ENCODE measurements at regions of chr2 and their contacts with region 1.

Region 1: GRCh38 chr2:61538200-61538919 is at the start of gene XPO1:
- DNase-seq: peak; percentile 95 to 100 (median 99)
- ATAC-seq: peak; percentile 89
- H3K4me3 ChIP-seq: peak within 1 kb of the TSS; percentile 96
- H3K4me3 Mint-ChIP-seq: peak within 1 kb of the TSS; percentile 89 to 100 (median 98)
- H3K27ac ChIP-seq: peak within 1 kb of the TSS; percentile 98
- H3K27ac Mint-ChIP-seq: peak within 1 kb of the TSS; percentile 94 to 100 (median 99)
- H3K4me1 ChIP-seq: peaks cover 19 to 24% of the 10 kb centered on the region in 2 donors
- H3K4me1 Mint-ChIP-seq: peaks cover 24 to 43% (median 35%) of the 10 kb centered on the region in 7 donors
- H3K27me3 ChIP-seq: no peaks in the 10 kb centered on the region
- H3K27me3 Mint-ChIP-seq: peaks cover 0 to 8% (median 0%) of the 10 kb centered on the region in 5 donors
- total RNA-seq, gene XPO1: 132 to 192 (median 181) TPM

Region 2: GRCh38 chr2:59888015-59888414 is 1650.3 kb before region 1 on chr2:
- CTCF ChIA-PET with region 1: no interaction called
- POLR2A ChIA-PET with region 1: no interaction called
- intact Hi-C with region 1: loop called in 1 of 2 experiments (anchors 5 kb)
- DNase-seq: peak in 8 of 9 donors; percentile 22 to 90 (median 86)
- ATAC-seq: peak; percentile 97
- H3K4me3 ChIP-seq: no peak overlapping the region
- H3K4me3 Mint-ChIP-seq: peak overlapping the region; percentile 3 to 85 (median 72)
- H3K27ac ChIP-seq: peak overlapping the region; percentile 54
- H3K27ac Mint-ChIP-seq: peak overlapping the region; percentile 29 to 92 (median 85)
- H3K4me1 ChIP-seq: peaks cover 0 to 38% of the 10 kb centered on the region in 2 donors
- H3K4me1 Mint-ChIP-seq: peaks cover 28 to 74% (median 57%) of the 10 kb centered on the region in 7 donors
- H3K27me3 ChIP-seq: no peaks in the 10 kb centered on the region
- H3K27me3 Mint-ChIP-seq: peaks cover 0 to 16% (median 0%) of the 10 kb centered on the region in 5 donors

Region 3: DNA sequence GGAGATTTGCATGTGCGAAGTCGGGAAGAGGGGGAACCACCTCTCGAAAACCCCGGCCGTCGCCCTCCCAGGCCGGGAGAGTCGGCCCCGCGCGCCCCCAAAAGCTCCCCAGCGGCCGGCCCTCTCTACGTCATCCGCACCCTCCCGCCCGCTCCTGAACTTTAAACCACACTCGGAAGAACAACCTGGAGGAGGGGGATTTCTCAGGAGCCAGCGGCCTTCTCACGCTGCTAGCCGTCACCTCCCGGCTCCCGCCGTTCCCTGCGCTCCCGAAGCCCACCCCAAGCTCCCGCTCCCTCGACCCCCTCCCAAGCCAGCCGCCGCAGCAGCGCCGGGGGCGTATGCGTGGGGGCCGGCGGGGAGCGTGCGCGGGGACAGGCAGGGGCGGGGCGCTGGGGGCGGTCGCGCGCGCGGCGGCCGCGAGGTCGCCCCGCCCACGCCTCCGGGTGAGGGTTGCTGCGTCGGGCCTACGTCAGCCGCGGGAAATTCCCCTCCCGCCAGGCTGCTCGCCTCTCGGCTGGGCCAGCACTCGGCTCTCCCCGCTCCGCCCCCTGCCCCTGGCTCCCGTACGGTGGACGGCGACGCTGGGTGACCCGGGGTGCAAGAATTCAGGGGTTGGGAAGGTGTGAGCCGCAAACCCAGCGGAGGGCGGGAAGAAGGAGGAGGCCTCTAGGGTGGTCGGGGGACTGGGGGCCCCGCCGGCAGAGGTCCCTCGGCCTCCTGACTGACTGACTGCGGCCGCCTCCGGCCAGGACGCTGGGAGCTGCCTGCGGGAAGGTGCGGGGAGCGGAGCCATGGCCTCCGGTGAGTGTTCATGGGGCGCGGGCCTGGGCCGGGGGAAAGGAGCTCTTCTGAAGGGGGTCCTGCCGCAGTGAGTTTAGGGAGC is 657.1 kb before region 1 on chr2 and contains the start of gene REL:
- CTCF ChIA-PET with region 1: no interaction called
- POLR2A ChIA-PET with region 1: no interaction called
- intact Hi-C with region 1: loop called (anchors 1 to 2 kb)
- DNase-seq: peak; percentile 77 to 95 (median 88)
- ATAC-seq: peak; percentile 92
- H3K4me3 ChIP-seq: peak within 1 kb of the TSS; percentile 83
- H3K4me3 Mint-ChIP-seq: peak within 1 kb of the TSS; percentile 91 to 98 (median 96)
- H3K27ac ChIP-seq: peak within 1 kb of the TSS; percentile 100
- H3K27ac Mint-ChIP-seq: peak within 1 kb of the TSS; percentile 93 to 100 (median 98)
- H3K4me1 ChIP-seq: peaks cover 11 to 24% of the 10 kb centered on the region in 2 donors
- H3K4me1 Mint-ChIP-seq: peaks cover 22 to 39% (median 33%) of the 10 kb centered on the region in 7 donors
- H3K27me3 ChIP-seq: no peaks in the 10 kb centered on the region
- H3K27me3 Mint-ChIP-seq: no peaks in the 10 kb centered on the region
- total RNA-seq, gene REL: 18.9 to 78.8 (median 26.4) TPM

Region 4: DNA sequence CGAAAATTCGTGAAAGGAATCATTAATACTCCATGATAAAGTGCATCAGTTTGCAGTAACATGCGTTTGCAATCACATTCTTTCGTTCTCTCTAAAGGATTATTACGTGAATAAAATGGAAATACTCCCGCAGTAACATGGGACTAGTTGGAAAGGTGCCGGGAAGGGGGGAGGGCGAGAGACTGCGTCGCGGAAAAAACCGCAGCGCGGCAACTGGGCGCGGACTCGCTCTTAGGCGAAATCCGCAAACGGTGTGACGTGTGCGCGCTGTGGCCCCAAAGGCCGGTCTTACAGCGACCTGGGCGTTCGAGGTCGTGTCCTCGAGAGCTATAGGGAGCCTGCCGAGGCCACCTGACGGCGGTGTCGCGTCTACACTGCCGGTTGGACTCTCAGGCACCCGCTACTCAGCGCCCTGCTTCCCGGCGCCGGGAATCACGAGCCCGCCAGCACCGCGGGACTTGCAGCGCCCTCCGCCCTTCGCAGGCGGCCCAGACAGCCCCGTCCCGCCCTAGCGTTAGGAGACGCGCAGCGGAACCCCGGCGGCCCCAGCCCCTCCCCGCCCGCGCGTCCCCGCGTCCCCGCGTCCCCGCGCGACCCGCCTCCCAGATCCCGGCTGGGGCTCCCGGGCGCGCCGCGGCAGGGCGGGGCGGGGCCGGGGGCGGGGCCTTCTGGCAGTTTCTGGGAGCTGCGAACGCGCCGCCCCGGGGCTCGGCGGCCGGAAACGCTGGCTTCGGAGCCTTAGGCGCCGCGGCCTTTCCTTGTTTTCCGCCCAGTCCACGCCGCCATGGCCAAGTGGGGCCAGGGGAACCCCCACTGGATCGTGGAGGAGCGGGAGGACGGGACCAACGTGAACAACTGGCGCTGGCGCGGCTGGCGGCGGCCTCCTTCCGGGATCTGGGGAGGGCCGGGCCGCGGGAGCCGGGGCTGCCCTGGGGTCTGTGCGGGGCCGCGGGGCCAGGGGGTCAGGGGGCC is 361.3 kb before region 1 on chr2:
- CTCF ChIA-PET with region 1: no interaction called
- POLR2A ChIA-PET with region 1: interaction called, 26 read pairs
- intact Hi-C with region 1: loop called (anchors 1 kb)
- DNase-seq: peak; percentile 89 to 97 (median 93)
- ATAC-seq: peak; percentile 95
- H3K4me3 ChIP-seq: peak overlapping the region; percentile 82
- H3K4me3 Mint-ChIP-seq: peak overlapping the region; percentile 90 to 100 (median 94)
- H3K27ac ChIP-seq: peak overlapping the region; percentile 97
- H3K27ac Mint-ChIP-seq: peak overlapping the region; percentile 89 to 97 (median 95)
- H3K4me1 ChIP-seq: peaks cover 27 to 41% of the 10 kb centered on the region in 2 donors
- H3K4me1 Mint-ChIP-seq: peaks cover 38 to 53% (median 48%) of the 10 kb centered on the region in 7 donors
- H3K27me3 ChIP-seq: no peaks in the 10 kb centered on the region
- H3K27me3 Mint-ChIP-seq: peaks cover 0 to 8% (median 0%) of the 10 kb centered on the region in 5 donors

Region 5: GRCh38 chr2:61582165-61582564 is 43.8 kb after region 1 on chr2:
- CTCF ChIA-PET with region 1: no interaction called
- POLR2A ChIA-PET with region 1: interaction called, 6 read pairs
- intact Hi-C with region 1: loop called in 1 of 2 experiments (anchors 5 kb)
- DNase-seq: no peak
- ATAC-seq: no peak
- H3K4me3 ChIP-seq: no peak overlapping the region
- H3K4me3 Mint-ChIP-seq: no peak overlapping the region
- H3K27ac ChIP-seq: no peak overlapping the region
- H3K27ac Mint-ChIP-seq: no peak overlapping the region
- H3K4me1 ChIP-seq: no peaks in the 10 kb centered on the region
- H3K4me1 Mint-ChIP-seq: peaks cover 0 to 15% (median 5%) of the 10 kb centered on the region in 7 donors
- H3K27me3 ChIP-seq: no peaks in the 10 kb centered on the region
- H3K27me3 Mint-ChIP-seq: peaks cover 0 to 4% (median 0%) of the 10 kb centered on the region in 5 donors

Region 6: DNA sequence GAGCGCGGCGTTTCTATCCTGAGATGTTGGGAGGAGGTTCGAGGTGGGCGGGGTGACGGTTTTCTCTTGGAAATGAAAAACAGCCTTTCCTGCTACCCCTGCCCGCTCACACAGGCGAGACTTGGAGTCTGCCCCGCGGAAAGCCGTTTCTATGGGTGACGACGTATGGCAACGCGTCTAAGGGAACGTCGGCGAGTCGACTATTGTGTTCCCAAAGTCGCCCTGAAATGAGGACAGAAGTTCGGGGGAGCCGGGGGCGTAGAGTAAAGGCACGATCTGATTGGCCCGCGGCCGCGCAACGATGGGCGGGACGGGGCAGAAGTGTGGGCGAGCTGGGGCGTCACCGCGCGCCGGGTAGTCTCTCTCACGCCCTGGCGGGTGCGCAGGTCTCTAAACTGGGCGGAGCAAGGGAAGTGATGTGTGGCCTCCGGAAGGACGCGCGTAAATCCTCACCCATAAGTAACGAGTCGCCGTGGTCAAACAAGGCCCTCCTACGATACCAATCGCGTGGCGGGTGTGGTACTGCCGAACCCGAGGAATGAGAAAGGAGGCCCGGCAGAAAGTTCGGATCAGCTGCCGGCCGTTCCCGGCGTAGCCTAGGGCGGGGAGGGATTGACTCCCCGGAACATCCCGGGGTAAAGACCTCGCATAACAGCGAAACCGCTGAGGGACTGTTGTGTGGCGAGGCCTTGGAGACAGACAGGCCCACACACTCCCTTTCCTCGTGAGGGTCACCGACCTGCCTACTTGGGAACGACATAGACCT is 225.9 kb after region 1 on chr2:
- CTCF ChIA-PET with region 1: no interaction called
- POLR2A ChIA-PET with region 1: interaction called, 17 read pairs
- intact Hi-C with region 1: loop called (anchors 1 kb)
- DNase-seq: peak; percentile 89 to 98 (median 97)
- ATAC-seq: peak; percentile 99
- H3K4me3 ChIP-seq: peak overlapping the region; percentile 71
- H3K4me3 Mint-ChIP-seq: peak overlapping the region; percentile 80 to 98 (median 95)
- H3K27ac ChIP-seq: peak overlapping the region; percentile 93
- H3K27ac Mint-ChIP-seq: peak overlapping the region; percentile 94 to 99 (median 98)
- H3K4me1 ChIP-seq: peaks cover 6 to 9% of the 10 kb centered on the region in 2 donors
- H3K4me1 Mint-ChIP-seq: peaks cover 0 to 16% (median 10%) of the 10 kb centered on the region in 7 donors
- H3K27me3 ChIP-seq: no peaks in the 10 kb centered on the region
- H3K27me3 Mint-ChIP-seq: peaks cover 0 to under 1% (median 0%) of the 10 kb centered on the region in 5 donors

Region 7: DNA sequence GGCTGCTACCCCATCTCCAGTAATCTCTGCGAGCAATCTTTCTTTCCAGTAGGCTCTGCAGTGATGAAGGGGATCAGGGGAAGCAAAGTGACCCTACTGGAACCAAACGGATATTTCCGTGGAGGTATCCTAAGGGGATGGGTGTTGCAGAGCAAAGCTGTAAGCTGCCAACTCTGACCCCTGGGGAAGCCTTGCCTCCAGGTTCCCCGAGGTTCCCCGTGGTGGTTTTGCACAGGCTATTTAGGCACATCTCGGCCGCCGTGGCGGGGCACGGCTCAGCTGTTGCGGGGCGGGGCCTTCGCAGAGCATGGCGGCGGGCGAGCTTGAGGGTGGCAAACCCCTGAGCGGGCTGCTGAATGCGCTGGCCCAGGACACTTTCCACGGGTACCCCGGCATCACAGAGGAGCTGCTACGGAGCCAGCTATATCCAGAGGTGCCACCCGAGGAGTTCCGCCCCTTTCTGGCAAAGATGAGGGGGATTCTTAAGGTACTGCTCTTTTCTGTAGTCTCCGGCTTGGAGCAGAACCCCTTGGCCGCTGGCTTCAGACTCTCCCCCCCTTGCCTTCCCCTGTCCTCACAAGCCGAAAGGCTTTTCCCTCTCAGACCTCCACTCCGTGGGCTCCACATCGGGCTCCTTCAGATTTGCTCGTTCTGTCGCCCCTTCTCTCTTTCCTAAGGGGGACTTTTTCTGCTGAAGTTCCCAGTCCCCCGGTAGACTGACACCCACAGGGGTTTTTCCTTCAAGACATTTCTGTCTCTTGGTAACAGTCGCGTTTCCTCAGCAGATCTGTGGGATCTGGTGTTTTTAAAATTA is 367.2 kb after region 1 on chr2 and contains the start of gene COMMD1:
- CTCF ChIA-PET with region 1: no interaction called
- POLR2A ChIA-PET with region 1: interaction called, 3 read pairs
- intact Hi-C with region 1: loop called in 1 of 2 experiments (anchors 5 kb)
- DNase-seq: peak; percentile 64 to 81 (median 76)
- ATAC-seq: peak; percentile 99
- H3K4me3 ChIP-seq: peak within 1 kb of the TSS; percentile 76
- H3K4me3 Mint-ChIP-seq: peak within 1 kb of the TSS; percentile 95 to 98 (median 96)
- H3K27ac ChIP-seq: peak within 1 kb of the TSS; percentile 83
- H3K27ac Mint-ChIP-seq: peak within 1 kb of the TSS; percentile 80 to 97 (median 86)
- H3K4me1 ChIP-seq: peaks cover 0 to 12% of the 10 kb centered on the region in 2 donors
- H3K4me1 Mint-ChIP-seq: peaks cover 14 to 42% (median 30%) of the 10 kb centered on the region in 7 donors
- H3K27me3 ChIP-seq: no peaks in the 10 kb centered on the region
- H3K27me3 Mint-ChIP-seq: no peaks in the 10 kb centered on the region
- total RNA-seq, gene COMMD1: 15.6 to 28.3 (median 20.8) TPM